ENCODE measurements at regions of chr4 and their contacts with region 1.

Region 1: DNA sequence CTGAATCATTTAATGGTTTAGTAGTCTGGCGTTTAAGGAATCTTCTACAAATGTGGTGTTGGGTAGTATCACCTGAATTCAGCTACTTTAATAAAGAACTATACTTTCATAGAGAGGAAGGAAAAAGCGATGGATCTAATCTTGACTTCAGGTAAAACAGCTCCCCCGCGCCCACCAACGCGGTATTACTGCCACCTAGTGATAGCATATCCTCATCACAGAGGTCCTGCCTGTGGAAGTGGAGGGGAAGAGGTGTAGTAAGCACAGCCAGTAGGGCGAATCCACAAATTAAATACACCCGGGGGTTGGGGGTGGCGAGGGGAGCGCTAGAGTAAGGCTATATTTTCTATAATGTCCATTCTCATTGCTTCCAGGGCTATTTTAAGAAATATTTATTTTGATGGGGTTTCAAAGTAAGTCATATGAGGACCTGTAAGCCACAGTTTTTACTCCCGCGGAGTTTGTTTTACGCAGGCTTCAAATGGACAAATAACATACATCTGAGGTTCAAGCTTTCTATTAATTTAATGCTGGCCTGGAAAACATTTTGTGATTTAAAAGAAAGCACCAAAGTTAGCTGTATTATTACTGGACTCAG is 8.3 kb upstream of the DAPP1 start:
- DNase-seq: peak; percentile 87
- H3K4me3 Mint-ChIP-seq: no peak overlapping the region
- H3K27ac Mint-ChIP-seq: no peak overlapping the region
- H3K4me1 Mint-ChIP-seq: peaks cover 14% of the 10 kb centered on the region
- H3K27me3 Mint-ChIP-seq: peaks cover 8% of the 10 kb centered on the region

Region 2: DNA sequence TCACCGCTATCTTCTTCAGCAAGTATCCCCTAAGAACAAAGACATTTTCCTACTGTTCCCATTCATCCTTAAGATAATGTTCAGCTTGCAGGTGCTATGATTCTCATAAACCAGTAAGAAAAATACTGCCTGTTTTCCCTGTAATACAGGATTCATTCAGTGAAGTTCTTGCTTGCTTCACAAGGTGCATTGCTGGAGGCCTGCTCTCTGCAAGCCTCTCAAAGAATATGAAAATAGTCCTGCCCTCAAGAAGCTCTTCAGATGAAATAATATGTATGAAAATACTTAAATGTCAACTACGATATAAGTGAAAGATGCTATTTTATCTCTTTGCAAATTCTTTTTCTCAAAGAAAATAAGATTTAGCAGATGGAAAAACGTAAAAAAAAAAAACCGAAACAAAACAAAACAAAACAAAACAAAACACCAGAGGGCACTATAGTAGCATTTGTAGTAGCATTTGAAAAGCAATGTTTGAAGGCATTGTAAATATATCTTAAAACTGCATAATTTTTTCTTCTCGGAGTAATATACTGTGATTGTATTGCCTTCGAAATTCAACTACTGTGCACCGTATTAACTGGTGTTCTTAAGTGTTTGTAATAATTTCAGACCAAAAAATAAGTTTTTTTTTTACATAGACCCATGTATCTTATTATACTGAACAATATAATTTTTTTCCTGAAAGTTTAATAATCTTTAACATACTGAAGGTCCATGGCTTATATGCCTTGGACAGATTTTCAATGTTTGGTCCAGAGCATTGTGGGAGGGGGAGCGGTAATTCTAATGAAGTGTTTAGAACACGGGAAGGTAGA is 690.3 kb before region 1 on chr4:
- CTCF ChIA-PET with region 1: no interaction called
- intact Hi-C with region 1: loop called (anchors 5 kb)
- DNase-seq: no peak
- H3K4me3 Mint-ChIP-seq: no peak overlapping the region
- H3K27ac Mint-ChIP-seq: no peak overlapping the region
- H3K4me1 Mint-ChIP-seq: no peaks in the 10 kb centered on the region
- H3K27me3 Mint-ChIP-seq: no peaks in the 10 kb centered on the region

Region 3: DNA sequence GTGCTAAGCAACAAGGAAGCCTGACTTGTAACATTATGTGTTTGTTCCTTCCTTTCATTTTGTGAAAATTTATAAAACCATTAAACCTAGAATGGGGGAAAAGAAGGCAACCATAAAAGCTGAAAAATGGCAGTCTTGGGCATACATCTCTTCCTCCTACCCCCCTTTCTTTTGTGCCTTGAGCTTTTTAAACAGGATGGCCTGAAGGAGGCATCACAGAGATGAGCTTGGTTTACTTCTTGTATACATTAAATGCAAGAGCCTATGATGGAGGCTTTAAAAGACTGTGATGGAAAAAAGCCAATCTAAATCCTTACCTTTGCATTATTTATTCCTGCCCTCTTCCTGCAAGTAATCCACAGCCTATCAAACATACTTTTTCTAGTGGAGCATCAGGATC is 337.0 kb before region 1 on chr4:
- CTCF ChIA-PET with region 1: no interaction called
- intact Hi-C with region 1: loop called (anchors 2 kb)
- DNase-seq: no peak
- H3K4me3 Mint-ChIP-seq: no peak overlapping the region
- H3K27ac Mint-ChIP-seq: no peak overlapping the region
- H3K4me1 Mint-ChIP-seq: no peaks in the 10 kb centered on the region
- H3K27me3 Mint-ChIP-seq: no peaks in the 10 kb centered on the region

Region 4: DNA sequence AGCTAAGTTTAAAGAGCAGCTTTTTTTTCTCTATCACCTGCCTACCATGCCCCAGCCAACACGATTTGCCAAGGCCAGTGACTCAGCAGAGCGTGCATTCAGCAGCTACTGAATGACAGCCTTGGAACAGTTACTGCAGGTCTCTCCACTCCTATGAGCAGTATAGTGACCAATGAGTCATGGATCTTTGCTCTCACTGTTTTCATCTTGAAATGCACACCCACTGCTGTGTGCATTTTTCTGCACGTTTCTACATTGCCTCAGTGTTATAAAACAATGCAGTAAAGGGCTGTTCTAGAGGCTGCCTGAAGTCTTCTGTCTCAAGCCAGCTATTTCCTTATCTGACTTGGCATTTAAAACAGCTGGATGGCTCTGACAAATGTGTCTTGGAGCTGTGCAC is 84.7 kb before region 1 on chr4:
- CTCF ChIA-PET with region 1: interaction called, 5 read pairs
- intact Hi-C with region 1: loop called (anchors 1 kb)
- DNase-seq: peak; percentile 25
- H3K4me3 Mint-ChIP-seq: no peak overlapping the region
- H3K27ac Mint-ChIP-seq: no peak overlapping the region
- H3K4me1 Mint-ChIP-seq: no peaks in the 10 kb centered on the region
- H3K27me3 Mint-ChIP-seq: peaks cover 2% of the 10 kb centered on the region

Region 5: GRCh38 chr4:99763635-99764101 is 44.7 kb before region 1 on chr4:
- CTCF ChIA-PET with region 1: no interaction called
- intact Hi-C with region 1: loop called (anchors 2 kb)
- DNase-seq: peak; percentile 38
- H3K4me3 Mint-ChIP-seq: no peak overlapping the region
- H3K27ac Mint-ChIP-seq: no peak overlapping the region
- H3K4me1 Mint-ChIP-seq: peaks cover 27% of the 10 kb centered on the region
- H3K27me3 Mint-ChIP-seq: peaks cover 13% of the 10 kb centered on the region

Region 6: GRCh38 chr4:99885063-99885664 is 76.8 kb after region 1 on chr4:
- CTCF ChIA-PET with region 1: interaction called, 50 read pairs
- intact Hi-C with region 1: loop called (anchors 1 kb)
- DNase-seq: peak; percentile 57
- H3K4me3 Mint-ChIP-seq: no peak overlapping the region
- H3K27ac Mint-ChIP-seq: no peak overlapping the region
- H3K4me1 Mint-ChIP-seq: peaks cover 6% of the 10 kb centered on the region
- H3K27me3 Mint-ChIP-seq: no peaks in the 10 kb centered on the region

Region 7: GRCh38 chr4:100063355-100063754 is 255.0 kb after region 1 on chr4:
- CTCF ChIA-PET with region 1: interaction called, 4 read pairs
- intact Hi-C with region 1: loop called (anchors 1 kb)
- DNase-seq: no peak
- H3K4me3 Mint-ChIP-seq: no peak overlapping the region
- H3K27ac Mint-ChIP-seq: no peak overlapping the region
- H3K4me1 Mint-ChIP-seq: no peaks in the 10 kb centered on the region
- H3K27me3 Mint-ChIP-seq: peaks cover 20% of the 10 kb centered on the region

Region 8: DNA sequence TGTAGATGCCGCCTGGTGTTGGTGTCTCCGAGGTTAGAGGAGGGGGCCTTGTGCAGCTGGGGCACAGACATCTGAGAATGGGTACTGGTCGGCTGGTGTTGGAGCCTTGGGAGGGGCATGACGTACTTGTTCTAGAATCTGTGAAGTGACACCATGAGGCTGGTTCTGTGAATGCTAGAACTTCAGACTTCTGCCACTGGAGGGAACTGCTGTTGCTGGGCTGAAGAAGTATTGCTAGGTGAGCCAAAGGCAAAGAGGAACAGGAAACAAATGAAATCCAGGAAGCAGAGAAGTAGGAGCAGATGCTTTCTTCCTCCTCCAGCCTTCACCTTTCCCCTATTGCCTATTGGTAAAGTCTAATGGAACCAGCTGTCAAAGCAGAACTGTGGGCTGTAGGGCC is 502.8 kb after region 1 on chr4:
- CTCF ChIA-PET with region 1: no interaction called
- intact Hi-C with region 1: no loop called
- DNase-seq: no peak
- H3K4me3 Mint-ChIP-seq: no peak overlapping the region
- H3K27ac Mint-ChIP-seq: no peak overlapping the region
- H3K4me1 Mint-ChIP-seq: no peaks in the 10 kb centered on the region
- H3K27me3 Mint-ChIP-seq: peaks cover 12% of the 10 kb centered on the region

Measured in activated naive CD4-positive, alpha-beta T cell treated with anti-CD3 and anti-CD28 coated beads for 36 hours (primary cell).